Activated B cell treated with CpG ODN at 0.5 μM for 24 hours (primary cell): ENCODE measurements at regions of chr15 and their contacts with region 1.

Region 1: DNA sequence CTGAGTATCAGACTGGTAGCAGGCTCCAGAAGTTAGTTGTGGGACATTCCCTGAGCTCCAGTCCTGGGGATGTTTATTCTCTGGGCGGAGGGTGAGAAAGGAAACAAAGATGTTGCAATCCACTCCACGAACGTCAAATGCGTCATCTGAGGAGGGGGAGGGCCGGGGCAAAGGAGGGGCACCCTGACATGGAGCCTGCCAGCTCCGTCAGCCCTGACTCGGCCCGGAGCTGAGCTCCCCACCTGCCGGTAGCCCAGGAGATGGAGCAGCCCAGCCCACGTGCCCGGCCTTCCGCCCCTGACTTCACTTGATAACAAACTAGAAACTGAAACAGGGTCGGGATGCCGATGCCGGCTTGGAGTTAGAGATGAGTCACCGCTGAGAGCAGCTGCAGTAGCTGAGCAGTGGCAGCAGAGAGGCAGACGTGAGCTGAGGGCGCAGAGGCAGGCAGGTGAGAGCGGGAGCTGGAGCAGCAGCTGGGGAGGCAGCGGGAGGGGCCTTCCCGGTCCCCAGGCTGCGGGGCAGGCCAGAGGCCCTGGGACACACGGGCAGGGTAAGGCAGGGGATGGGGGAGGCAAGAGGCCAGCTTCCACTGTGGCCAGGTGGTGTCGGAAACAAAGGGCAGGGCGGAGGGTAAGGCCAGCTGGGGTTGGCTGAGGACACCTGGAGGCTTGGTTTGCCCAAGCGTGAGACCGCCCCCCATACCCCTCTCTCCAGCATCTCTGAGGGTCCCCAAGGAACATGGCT is at the start of gene ISG20:
- DNase-seq: peak; percentile 82
- ATAC-seq: peak; percentile 70
- H3K4me3 Mint-ChIP-seq: peak within 1 kb of the TSS; percentile 91
- H3K27ac Mint-ChIP-seq: peak within 1 kb of the TSS; percentile 97
- H3K4me1 Mint-ChIP-seq: peaks cover 90% of the 10 kb centered on the region
- H3K27me3 Mint-ChIP-seq: no peaks in the 10 kb centered on the region
- CTCF ChIP-seq: no peak
- total RNA-seq, gene ISG20: 84.6 and 87.1 TPM in 2 replicates

Region 2: GRCh38 chr15:88546248-88547129 is 92.3 kb before region 1 on chr15 and contains the start of gene DET1:
- CTCF ChIA-PET with region 1: no interaction called
- POLR2A ChIA-PET with region 1: no interaction called
- intact Hi-C with region 1: loop called (anchors 1 kb)
- DNase-seq: peak; percentile 88
- ATAC-seq: peak; percentile 94
- H3K4me3 Mint-ChIP-seq: peak within 1 kb of the TSS; percentile 92
- H3K27ac Mint-ChIP-seq: peak within 1 kb of the TSS; percentile 94
- H3K4me1 Mint-ChIP-seq: peaks cover 14% of the 10 kb centered on the region
- H3K27me3 Mint-ChIP-seq: no peaks in the 10 kb centered on the region
- CTCF ChIP-seq: no peak
- total RNA-seq, gene DET1: 5.7 and 7.1 TPM in 2 replicates

Region 3: GRCh38 chr15:88627463-88627862 is 11.3 kb before region 1 on chr15:
- CTCF ChIA-PET with region 1: interaction called, 14 read pairs
- POLR2A ChIA-PET with region 1: interaction called, 19 read pairs
- intact Hi-C with region 1: loop called (anchors 1 kb)
- DNase-seq: no peak
- ATAC-seq: peak; percentile 50
- H3K4me3 Mint-ChIP-seq: peak overlapping the region; percentile 53
- H3K27ac Mint-ChIP-seq: peak overlapping the region; percentile 82
- H3K4me1 Mint-ChIP-seq: peaks cover 92% of the 10 kb centered on the region
- H3K27me3 Mint-ChIP-seq: no peaks in the 10 kb centered on the region
- CTCF ChIP-seq: no peak

Region 4: GRCh38 chr15:88664151-88664778 is 25.5 kb after region 1 on chr15:
- CTCF ChIA-PET with region 1: interaction called, 5 read pairs
- POLR2A ChIA-PET with region 1: no interaction called
- intact Hi-C with region 1: loop called (anchors 1 kb)
- DNase-seq: no peak
- ATAC-seq: peak; percentile 81
- H3K4me3 Mint-ChIP-seq: no peak overlapping the region
- H3K27ac Mint-ChIP-seq: no peak overlapping the region
- H3K4me1 Mint-ChIP-seq: peaks cover 21% of the 10 kb centered on the region
- H3K27me3 Mint-ChIP-seq: peaks cover 6% of the 10 kb centered on the region
- CTCF ChIP-seq: no peak